ENCODE measurements at regions of chr5 and their contacts with region 1.

Region 1: GRCh38 chr5:159987031-159987674 is 21.8 kb upstream of the TTC1 start:
- DNase-seq: peak; percentile 55 to 98 (median 84)

Region 2: DNA sequence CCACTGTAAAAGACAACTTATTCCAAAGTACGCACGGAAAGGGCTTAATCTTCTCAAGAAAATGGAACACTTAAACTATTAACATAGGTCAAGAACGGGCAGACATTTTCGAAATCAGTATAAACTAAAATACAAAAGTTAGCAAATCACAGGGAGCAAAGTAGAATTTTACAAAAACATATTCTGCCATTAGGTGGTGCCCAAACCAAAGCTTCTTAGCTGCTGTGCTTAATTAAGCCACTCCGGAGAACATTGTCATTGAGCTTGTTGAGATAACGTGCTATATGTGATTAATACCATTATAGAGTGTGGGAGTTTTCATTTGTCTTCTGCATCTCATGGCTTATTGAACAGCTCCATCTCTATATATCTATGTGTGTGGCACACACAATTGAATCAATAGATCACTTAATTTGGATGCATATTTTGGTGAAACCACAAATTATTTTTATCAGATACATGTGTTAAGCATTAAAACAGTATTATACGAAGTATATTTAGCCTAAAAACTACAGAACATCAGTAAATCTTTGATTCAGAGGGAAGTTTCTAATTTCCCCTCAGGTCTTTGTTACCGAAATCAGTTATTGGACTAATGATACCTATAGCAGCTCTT is 700.6 kb before region 1 on chr5:
- intact Hi-C with region 1: loop called (anchors 2 kb)
- DNase-seq: no peak

Region 3: DNA sequence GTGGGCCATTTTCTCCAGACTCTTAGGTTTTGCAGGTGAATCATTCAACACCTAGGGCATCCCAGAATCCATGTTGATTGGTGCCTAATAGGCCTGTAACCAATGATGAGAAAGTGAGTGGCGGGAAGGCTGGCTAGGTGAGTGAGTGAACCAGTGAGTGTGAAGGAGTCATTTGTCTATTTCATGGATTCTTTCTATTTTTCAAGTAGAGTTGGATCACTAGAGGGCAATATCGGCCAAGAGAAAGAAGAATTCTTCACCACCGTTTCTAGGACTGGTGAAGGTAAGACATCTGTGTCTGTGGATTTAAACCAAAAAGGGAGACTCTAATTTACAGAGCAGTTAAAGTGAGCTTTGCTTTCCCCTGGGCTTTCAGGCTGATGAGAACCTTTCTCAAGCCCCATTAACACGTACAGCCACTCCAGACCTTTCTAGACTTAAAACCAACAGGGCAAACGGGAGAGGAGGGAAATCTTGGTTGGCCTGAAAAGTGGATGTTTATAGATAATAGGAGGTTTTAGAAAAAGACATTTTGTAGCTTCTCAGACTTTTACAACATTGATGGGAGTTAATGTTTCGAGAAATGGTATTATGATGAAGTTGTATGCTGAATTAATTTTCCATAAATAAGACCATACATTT is 542.6 kb before region 1 on chr5:
- intact Hi-C with region 1: loop called (anchors 2 kb)
- DNase-seq: no peak

Region 4: DNA sequence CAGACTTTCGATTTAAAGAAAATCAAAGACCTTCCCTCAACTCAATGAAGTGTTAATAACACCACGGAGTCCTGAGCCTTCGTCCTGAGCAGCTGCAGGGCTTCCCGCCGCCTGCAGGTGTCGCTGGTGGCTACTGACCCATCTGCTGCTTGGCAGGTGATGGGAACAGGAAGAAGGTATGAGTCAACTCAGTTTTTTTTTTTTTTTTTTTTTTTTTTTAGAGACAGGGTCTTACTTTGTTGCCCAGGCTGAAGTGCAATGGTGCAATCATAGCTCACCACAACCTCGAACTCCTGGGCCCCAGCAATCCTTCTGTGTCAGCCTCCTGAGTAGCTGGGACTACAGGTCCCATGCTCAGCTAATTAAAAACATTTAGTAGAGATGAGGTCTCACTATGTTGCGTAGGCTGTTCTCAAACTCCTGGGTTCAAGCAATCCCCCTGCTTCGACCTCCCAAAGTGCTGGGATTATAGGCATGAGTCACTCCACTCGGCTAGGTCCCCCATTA is 471.2 kb before region 1 on chr5:
- intact Hi-C with region 1: loop called (anchors 1 kb)
- DNase-seq: peak in 9 of 10 donors; percentile 16 to 92 (median 42)